Tibial artery (tissue), 4 donors: ENCODE measurements at regions of chr5 and their contacts with region 1.

Region 1: GRCh38 chr5:139422307-139422893 is 16.9 kb downstream of the DNAJC18 start:
- DNase-seq: peak in 1 of 2 donors; percentile 43
- H3K4me3 ChIP-seq: no peak overlapping the region
- H3K27ac ChIP-seq: no peak overlapping the region
- H3K4me1 ChIP-seq: peaks cover 0 to 29% (median 6%) of the 10 kb centered on the region in 4 donors
- H3K27me3 ChIP-seq: no peaks in the 10 kb centered on the region
- CTCF ChIP-seq: peak; percentile 82

Region 2: DNA sequence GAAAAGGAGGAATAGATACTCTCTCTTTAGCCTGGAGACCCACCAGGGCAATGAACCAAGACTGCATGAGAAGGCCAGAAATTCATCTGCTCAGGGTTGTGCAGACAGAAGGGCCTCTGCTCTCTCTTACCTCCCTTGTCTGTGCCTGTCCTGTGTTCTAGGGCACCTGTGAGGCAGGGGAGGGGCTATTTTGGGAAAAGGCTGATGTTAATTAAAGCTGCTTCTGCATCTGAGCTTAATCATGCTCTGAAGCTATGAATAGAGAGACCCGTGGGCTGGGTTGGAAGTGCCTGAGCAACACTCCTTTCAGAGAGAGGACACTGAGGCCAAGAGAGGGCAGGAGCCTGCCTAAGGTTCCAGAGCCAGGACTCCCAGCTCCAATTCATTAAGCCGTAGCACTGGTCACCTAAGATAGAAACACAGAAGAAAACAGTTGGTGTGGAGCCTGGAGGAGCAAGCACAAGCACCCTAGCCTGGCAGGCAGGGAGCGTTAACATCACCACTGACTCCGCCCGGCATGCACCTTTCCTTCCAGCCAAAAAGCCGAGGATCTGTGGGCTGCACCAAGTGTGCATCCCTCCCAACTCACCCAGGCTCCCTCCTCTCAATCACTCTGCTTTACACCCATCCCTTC is 91.6 kb after region 1 on chr5:
- intact Hi-C with region 1: loop called (anchors 2 kb)
- DNase-seq: no peak
- H3K4me3 ChIP-seq: no peak overlapping the region
- H3K27ac ChIP-seq: no peak overlapping the region
- H3K4me1 ChIP-seq: peaks cover 0 to 9% (median 3%) of the 10 kb centered on the region in 4 donors
- H3K27me3 ChIP-seq: no peaks in the 10 kb centered on the region
- CTCF ChIP-seq: no peak